ENCODE measurements at regions of chr1 and their contacts with region 1.

Region 1: GRCh38 chr1:23098463-23099170 is 70.0 kb downstream of the LUZP1 start:
- DNase-seq: peak; percentile 87
- H3K4me3 ChIP-seq: no peak overlapping the region
- H3K27ac ChIP-seq: no peak overlapping the region
- H3K4me1 ChIP-seq: peaks cover 39% of the 10 kb centered on the region
- H3K27me3 ChIP-seq: no peaks in the 10 kb centered on the region
- CTCF ChIP-seq: peak; percentile 94

Region 2: DNA sequence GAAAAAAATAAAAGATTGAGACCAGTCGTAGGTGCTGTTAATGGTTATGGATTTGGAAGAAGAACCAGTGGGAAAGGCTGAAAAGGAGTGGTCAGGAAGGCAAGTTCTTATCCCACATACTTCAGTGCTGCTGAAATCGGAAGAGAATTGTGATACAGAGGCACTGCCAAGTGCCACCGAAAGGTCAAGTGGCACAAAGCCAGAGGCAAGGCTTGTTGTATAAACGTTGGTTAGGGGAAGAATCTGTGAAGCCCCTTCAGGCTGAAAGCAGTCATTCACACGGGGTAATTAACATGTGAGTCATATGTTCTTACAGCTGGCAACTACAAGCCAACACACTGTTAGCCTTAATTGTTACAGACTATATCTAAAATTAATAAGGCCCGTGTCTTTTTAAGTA is 598.1 kb before region 1 on chr1:
- CTCF ChIA-PET with region 1: no interaction called
- POLR2A ChIA-PET with region 1: no interaction called
- intact Hi-C with region 1: no loop called
- DNase-seq: peak; percentile 65
- H3K4me3 ChIP-seq: no peak overlapping the region
- H3K27ac ChIP-seq: no peak overlapping the region
- H3K4me1 ChIP-seq: peaks cover 7% of the 10 kb centered on the region
- H3K27me3 ChIP-seq: no peaks in the 10 kb centered on the region
- CTCF ChIP-seq: no peak

Region 3: GRCh38 chr1:22976461-22977243 is 122.0 kb before region 1 on chr1:
- CTCF ChIA-PET with region 1: no interaction called
- POLR2A ChIA-PET with region 1: no interaction called
- intact Hi-C with region 1: loop called (anchors 5 kb)
- DNase-seq: peak; percentile 90
- H3K4me3 ChIP-seq: no peak overlapping the region
- H3K27ac ChIP-seq: no peak overlapping the region
- H3K4me1 ChIP-seq: peaks cover 16% of the 10 kb centered on the region
- H3K27me3 ChIP-seq: no peaks in the 10 kb centered on the region
- CTCF ChIP-seq: peak; percentile 94

Region 4: GRCh38 chr1:23184212-23184934 is 85.8 kb after region 1 on chr1:
- CTCF ChIA-PET with region 1: interaction called, 51 read pairs
- POLR2A ChIA-PET with region 1: no interaction called
- intact Hi-C with region 1: loop called (anchors 1 kb)
- DNase-seq: peak; percentile 77
- H3K4me3 ChIP-seq: peak overlapping the region; percentile 32
- H3K27ac ChIP-seq: no peak overlapping the region
- H3K4me1 ChIP-seq: no peaks in the 10 kb centered on the region
- H3K27me3 ChIP-seq: no peaks in the 10 kb centered on the region
- CTCF ChIP-seq: peak; percentile 69

Region 5: GRCh38 chr1:23263380-23263887 is 164.8 kb after region 1 on chr1:
- CTCF ChIA-PET with region 1: no interaction called
- POLR2A ChIA-PET with region 1: no interaction called
- intact Hi-C with region 1: loop called (anchors 10 kb)
- DNase-seq: no peak
- H3K4me3 ChIP-seq: no peak overlapping the region
- H3K27ac ChIP-seq: no peak overlapping the region
- H3K4me1 ChIP-seq: no peaks in the 10 kb centered on the region
- H3K27me3 ChIP-seq: no peaks in the 10 kb centered on the region
- CTCF ChIP-seq: no peak

Measured in A673 (cell line).